CD4-positive, alpha-beta memory T cell (primary cell): ENCODE measurements at regions of chr15 and their contacts with region 1.

Region 1: GRCh38 chr15:91867581-91868026 is 14.1 kb downstream of the SLCO3A1 start:
- DNase-seq: no peak
- H3K4me3 ChIP-seq: no peak overlapping the region
- H3K4me3 Mint-ChIP-seq: peak overlapping the region; percentile 18 to 59 (median 52)
- H3K27ac ChIP-seq: no peak overlapping the region
- H3K27ac Mint-ChIP-seq: peak overlapping the region in 6 of 7 donors; percentile 17 to 72 (median 44)
- H3K4me1 ChIP-seq: peaks cover 91% of the 10 kb centered on the region
- H3K4me1 Mint-ChIP-seq: peaks cover 63 to 92% (median 76%) of the 10 kb centered on the region in 4 donors
- H3K27me3 ChIP-seq: no peaks in the 10 kb centered on the region
- H3K27me3 Mint-ChIP-seq: no peaks in the 10 kb centered on the region

Region 2: DNA sequence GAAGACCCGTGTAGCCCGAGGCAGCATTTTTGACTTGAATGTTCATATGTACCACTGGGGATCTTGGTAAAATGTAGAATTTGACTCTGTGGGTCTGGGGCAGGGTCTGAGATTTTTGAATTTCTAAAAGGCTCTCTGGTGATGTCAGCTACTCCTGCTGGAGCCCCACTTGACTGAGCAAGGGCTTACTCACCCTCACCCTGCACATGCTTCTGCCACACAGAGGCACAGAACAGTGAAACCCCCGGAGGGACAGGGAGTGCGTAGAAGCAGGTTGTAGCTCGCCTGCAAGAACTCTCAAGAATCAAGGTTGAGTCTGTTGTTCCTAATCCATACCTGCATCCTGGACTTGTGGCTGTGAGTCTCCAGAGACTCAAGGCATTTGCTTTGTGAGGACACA is 27.0 kb after region 1 on chr15:
- CTCF ChIA-PET with region 1: no interaction called
- POLR2A ChIA-PET with region 1: no interaction called
- intact Hi-C with region 1: loop called (anchors 5 kb)
- DNase-seq: no peak
- H3K4me3 ChIP-seq: no peak overlapping the region
- H3K4me3 Mint-ChIP-seq: peak overlapping the region in 2 of 8 donors; percentile 30 to 32
- H3K27ac ChIP-seq: no peak overlapping the region
- H3K27ac Mint-ChIP-seq: peak overlapping the region in 1 of 7 donors; percentile 83
- H3K4me1 ChIP-seq: peaks cover 9% of the 10 kb centered on the region
- H3K4me1 Mint-ChIP-seq: peaks cover 38 to 78% (median 58%) of the 10 kb centered on the region in 4 donors
- H3K27me3 ChIP-seq: no peaks in the 10 kb centered on the region
- H3K27me3 Mint-ChIP-seq: no peaks in the 10 kb centered on the region

Region 3: GRCh38 chr15:91956026-91956723 is 88.6 kb after region 1 on chr15:
- CTCF ChIA-PET with region 1: no interaction called
- POLR2A ChIA-PET with region 1: no interaction called
- intact Hi-C with region 1: no loop called
- DNase-seq: no peak
- H3K4me3 ChIP-seq: no peak overlapping the region
- H3K4me3 Mint-ChIP-seq: no peak overlapping the region
- H3K27ac ChIP-seq: no peak overlapping the region
- H3K27ac Mint-ChIP-seq: peak overlapping the region in 2 of 7 donors; percentile 54 to 80
- H3K4me1 ChIP-seq: peaks cover 35% of the 10 kb centered on the region
- H3K4me1 Mint-ChIP-seq: peaks cover 49 to 61% (median 51%) of the 10 kb centered on the region in 4 donors
- H3K27me3 ChIP-seq: no peaks in the 10 kb centered on the region
- H3K27me3 Mint-ChIP-seq: no peaks in the 10 kb centered on the region